ENCODE measurements at regions of chr19 and their contacts with region 1.

Region 1: DNA sequence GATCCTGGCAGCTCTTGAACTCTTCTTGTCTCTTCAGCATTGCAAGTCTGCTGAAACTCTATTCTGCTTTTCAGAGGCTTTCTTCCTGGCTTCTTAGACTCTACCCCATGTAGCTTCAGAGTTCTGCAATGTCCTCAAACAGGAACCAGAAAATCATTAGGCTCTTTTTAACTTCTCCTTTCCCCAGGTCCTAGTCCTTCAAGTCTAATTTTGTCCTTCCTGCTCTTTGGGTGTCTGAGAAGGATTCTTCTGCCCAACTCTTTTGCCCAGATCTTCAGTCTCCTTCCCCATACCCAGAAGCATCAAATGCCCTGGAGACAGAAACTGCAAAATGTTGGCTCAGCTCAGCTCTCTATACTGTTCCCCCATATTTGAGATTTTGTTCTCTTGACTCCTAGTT is 50.0 kb upstream of the CALM3 start:
- DNase-seq: no peak
- ATAC-seq: no peak
- H3K4me3 Mint-ChIP-seq: no peak overlapping the region
- H3K27ac Mint-ChIP-seq: no peak overlapping the region
- H3K4me1 Mint-ChIP-seq: peaks cover 4% of the 10 kb centered on the region
- H3K27me3 Mint-ChIP-seq: peaks cover 10% of the 10 kb centered on the region

Region 2: GRCh38 chr19:46537136-46538097 is 13.7 kb before region 1 on chr19:
- CTCF ChIA-PET with region 1: interaction called, 14 read pairs
- POLR2A ChIA-PET with region 1: no interaction called
- DNase-seq: peak; percentile 70
- ATAC-seq: peak; percentile 75
- H3K4me3 Mint-ChIP-seq: no peak overlapping the region
- H3K27ac Mint-ChIP-seq: no peak overlapping the region
- H3K4me1 Mint-ChIP-seq: peaks cover 5% of the 10 kb centered on the region
- H3K27me3 Mint-ChIP-seq: peaks cover 3% of the 10 kb centered on the region

Region 3: DNA sequence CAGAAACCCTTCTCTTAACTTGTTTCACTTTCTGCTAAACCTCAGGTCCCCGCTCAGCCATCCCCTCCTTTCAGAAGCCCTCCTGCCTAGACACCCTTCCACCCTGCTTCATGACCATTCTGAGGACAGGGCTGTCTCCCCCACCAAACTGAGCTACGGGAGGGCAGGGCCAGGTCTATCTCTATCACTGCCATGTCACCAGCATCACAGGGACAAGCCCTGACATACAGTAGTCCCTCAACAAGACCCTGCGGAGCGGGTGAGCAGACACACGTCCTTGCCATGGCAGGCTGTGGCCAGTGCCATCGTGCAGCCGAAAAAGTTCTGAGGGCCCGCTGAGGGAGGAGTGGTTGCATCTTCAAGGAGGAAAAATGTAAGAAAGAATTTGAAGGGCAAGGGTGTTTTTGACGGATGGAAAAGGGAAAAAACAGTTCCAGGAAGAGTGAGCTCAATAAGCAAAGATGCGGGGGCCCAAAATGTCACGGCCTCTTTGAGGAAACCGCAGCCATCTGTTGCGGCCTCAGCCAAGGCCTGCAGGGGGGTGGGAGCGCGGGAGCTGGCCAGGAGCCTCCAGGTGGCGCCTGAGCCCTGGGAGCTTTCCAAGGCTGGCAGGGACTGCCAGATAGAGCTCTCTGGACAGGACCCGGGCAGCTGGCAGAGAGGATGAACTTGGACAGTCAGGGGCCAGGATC is 65.6 kb after region 1 on chr19:
- CTCF ChIA-PET with region 1: no interaction called
- POLR2A ChIA-PET with region 1: no interaction called
- DNase-seq: peak; percentile 60
- ATAC-seq: peak; percentile 26
- H3K4me3 Mint-ChIP-seq: peak overlapping the region; percentile 49
- H3K27ac Mint-ChIP-seq: peak overlapping the region; percentile 94
- H3K4me1 Mint-ChIP-seq: peaks cover 83% of the 10 kb centered on the region
- H3K27me3 Mint-ChIP-seq: no peaks in the 10 kb centered on the region